ENCODE measurements at regions of chr17 and their contacts with region 1.

Region 1: DNA sequence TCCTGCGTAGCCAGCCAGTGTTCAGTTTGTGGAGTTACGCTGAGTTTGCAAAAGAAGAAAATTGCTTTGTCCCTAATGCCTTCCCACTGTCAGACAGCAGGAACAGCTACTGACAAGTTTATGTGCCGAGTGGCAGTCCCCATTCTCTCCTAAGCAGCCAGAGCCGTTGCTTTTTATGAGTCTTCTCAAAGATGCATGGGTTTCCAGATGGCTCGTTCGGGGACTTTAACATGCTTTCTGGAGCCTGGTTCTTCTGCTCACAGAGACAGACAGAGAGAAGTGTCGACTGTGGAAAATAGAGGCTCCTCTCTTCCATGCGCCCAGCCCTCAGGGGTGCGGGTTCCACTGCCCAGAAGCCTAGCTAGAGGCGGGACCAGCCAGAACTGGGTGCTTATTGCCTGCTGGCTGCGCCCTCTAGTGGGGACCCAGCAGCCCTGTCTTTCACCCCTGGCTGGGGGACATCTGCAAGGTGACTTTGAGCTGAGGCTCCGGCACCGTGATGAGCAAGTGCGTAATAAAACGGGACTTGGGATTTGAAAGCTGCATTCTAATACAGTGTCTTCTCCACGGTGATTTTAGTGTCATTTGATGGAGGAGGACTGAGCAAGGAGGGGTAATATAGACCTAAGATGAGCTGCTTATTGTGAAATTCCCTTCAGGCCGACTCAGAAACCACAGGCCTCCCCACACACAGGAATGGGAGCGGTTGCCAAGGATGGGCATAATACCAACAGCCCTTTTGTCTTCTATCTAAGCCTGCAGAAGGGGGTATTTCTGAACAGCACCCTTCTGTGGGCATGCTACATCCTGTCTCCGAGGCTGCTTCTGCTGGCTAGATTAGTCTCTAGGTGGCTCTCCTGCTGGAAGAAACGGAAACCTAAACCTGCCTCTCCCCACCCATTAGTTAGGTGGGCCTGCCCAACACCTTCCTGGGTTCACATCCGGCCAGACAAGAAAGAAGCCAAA is 73.1 kb downstream of the CCDC182 start:
- DNase-seq: peak; percentile 34 to 60
- ATAC-seq: peak; percentile 64 to 84
- H3K4me3 ChIP-seq: no peak overlapping the region
- H3K27ac ChIP-seq: peak overlapping the region in 1 of 4 donors; percentile 19
- H3K4me1 ChIP-seq: no peaks in the 10 kb centered on the region
- H3K27me3 ChIP-seq: no peaks in the 10 kb centered on the region
- CTCF ChIP-seq: peak; percentile 82 to 94 (median 88)
- POLR2A ChIP-seq: no peak

Region 2: DNA sequence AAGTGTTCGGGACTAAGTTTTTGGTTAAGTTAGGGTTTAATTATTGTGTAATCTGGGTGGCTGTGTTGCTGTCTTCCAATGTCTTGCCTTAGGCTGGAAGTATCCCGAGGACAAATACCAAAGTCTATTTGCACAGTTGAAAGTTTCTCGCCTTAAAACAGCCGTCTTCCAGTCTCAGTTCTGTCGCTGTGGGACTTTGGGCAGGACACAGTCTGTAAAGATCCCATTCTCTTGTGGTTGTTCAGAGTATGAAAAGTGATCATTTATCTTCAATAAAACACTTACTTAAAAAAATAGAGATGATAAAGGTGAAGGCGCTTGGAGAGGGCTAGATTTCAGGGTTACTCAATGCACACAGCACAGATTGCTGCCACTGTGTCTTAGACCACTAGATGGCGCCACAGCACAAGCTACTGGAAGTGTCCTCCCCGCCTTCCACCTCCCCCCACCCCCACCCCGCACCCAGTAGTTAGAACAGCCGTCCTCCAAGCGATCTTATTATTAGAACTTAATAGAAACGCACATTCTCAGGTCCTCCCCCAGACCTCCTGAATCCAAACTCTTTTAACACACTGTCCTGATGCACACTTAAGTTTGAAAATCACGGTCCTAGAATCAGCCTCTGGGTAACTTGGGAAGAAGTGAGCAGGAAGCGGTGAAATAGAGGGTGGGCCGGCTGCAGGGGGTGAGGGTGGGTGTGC is 541.0 kb before region 1 on chr17:
- in situ Hi-C with region 1: loop called in 1 of 4 experiments (anchors 10 kb)
- intact Hi-C with region 1: loop called (anchors 5 kb)
- DNase-seq: peak; percentile 67 to 79
- ATAC-seq: peak; percentile 94 to 98
- H3K4me3 ChIP-seq: peak overlapping the region in 2 of 4 donors; percentile 15 to 25
- H3K27ac ChIP-seq: no peak overlapping the region
- H3K4me1 ChIP-seq: peaks cover under 1 to 2% of the 10 kb centered on the region in 2 donors
- H3K27me3 ChIP-seq: no peaks in the 10 kb centered on the region
- CTCF ChIP-seq: peak; percentile 60 to 95 (median 78)
- POLR2A ChIP-seq: no peak

Region 3: DNA sequence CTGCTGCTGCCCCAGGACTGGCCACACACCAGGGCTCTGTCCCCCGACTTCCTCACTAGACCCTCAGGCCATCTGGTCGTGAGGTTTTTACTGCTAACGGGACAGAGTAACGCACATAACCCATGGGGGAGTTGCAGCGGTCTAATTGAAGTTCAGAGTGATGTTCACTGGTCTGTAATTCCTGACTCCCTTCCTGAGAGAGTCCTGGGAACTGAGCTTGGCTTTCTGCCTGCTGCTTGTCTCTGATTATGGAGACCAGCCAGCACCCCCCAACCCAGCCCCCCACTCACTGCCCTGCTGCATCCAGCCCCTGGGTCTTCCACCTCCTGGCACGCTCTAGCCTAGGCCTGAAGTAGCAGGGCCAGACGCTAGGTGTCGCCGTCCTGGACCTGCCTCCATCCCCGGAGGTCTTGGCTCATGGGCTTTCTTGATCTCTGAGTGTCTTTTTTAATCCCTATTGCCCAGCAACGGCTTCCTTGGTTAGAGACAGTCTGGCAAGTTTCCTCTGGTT is 119.8 kb before region 1 on chr17:
- in situ Hi-C with region 1: no loop called
- intact Hi-C with region 1: loop called (anchors 5 kb)
- DNase-seq: peak in 1 of 2 donors; percentile 47
- ATAC-seq: peak in 1 of 2 donors; percentile 34
- H3K4me3 ChIP-seq: no peak overlapping the region
- H3K27ac ChIP-seq: no peak overlapping the region
- H3K4me1 ChIP-seq: peaks cover 39 to 49% of the 10 kb centered on the region in 2 donors
- H3K27me3 ChIP-seq: no peaks in the 10 kb centered on the region
- CTCF ChIP-seq: peak in 4 of 5 experiments; percentile 29 to 57 (median 46)
- POLR2A ChIP-seq: no peak

Region 4: DNA sequence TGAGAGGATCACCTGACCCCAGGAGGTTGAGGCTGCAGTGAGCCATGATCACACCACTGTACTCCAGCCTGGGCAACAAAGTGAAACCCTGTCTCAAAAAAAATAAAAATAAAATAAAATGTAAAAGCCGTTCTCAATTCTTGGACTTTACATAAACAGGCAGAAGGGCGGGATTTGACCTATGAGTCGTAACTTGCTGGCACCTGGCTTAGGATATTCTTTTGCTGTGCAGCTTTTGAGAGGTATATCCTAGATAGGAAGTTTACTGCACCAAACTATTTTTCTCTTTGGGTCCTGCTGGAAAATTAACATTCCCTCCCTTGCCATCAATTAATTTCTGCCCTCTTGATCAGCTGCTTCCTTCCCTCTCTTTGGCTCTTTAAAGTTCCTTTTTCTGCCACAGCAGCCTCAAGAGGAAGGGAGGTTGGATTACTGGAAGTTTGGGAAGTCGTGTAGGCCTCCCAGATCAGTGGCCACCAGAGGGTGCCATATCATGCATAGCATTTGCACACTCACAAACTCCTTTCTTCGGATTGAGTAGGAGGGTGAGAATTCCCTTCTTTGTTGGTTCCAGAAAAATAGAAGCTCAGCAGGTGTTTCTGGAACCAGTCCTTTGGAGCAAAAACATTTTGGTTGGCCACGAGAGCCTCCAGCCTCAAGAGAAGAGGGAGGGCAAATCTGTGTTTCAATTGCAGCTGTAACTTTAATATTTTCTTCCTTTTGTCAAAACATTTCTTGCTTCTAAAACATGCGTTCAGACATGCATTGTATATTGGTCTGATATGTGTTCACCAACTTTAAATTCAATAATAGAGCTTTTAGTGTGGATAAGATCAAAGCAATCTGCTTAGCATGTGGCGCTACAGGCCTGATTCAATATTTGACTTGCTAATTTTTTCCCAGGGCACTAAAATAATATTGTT is 74.2 kb before region 1 on chr17:
- in situ Hi-C with region 1: no loop called
- intact Hi-C with region 1: loop called (anchors 2 kb)
- DNase-seq: peak in 1 of 2 donors; percentile 66
- ATAC-seq: peak; percentile 60 to 85
- H3K4me3 ChIP-seq: no peak overlapping the region
- H3K27ac ChIP-seq: peak overlapping the region; percentile 37 to 65 (median 58)
- H3K4me1 ChIP-seq: peaks cover 18 to 19% of the 10 kb centered on the region in 2 donors
- H3K27me3 ChIP-seq: no peaks in the 10 kb centered on the region
- CTCF ChIP-seq: peak; percentile 66 to 85 (median 74)
- POLR2A ChIP-seq: no peak